Naive thymus-derived CD8-positive, alpha-beta T cell (primary cell): ENCODE measurements at regions of chr12 and their contacts with region 1.

Region 1: GRCh38 chr12:123614531-123614930 is 12.6 kb downstream of the DDX55 start:
- DNase-seq: no peak
- ATAC-seq: no peak
- H3K4me3 Mint-ChIP-seq: no peak overlapping the region
- H3K27ac Mint-ChIP-seq: no peak overlapping the region
- H3K4me1 Mint-ChIP-seq: peaks cover 0 to 6% (median 1%) of the 10 kb centered on the region in 4 donors
- H3K27me3 Mint-ChIP-seq: no peaks in the 10 kb centered on the region

Region 2: GRCh38 chr12:123533672-123534643 is 80.6 kb before region 1 on chr12 and contains the start of gene RILPL1:
- POLR2A ChIA-PET with region 1: no interaction called
- DNase-seq: peak; percentile 12 to 65 (median 49)
- ATAC-seq: peak; percentile 82 to 83
- H3K4me3 Mint-ChIP-seq: peak within 1 kb of the TSS; percentile 75 to 92 (median 87)
- H3K27ac Mint-ChIP-seq: peak within 1 kb of the TSS in 9 of 10 donors; percentile 29 to 88 (median 79)
- H3K4me1 Mint-ChIP-seq: peaks cover 7 to 20% (median 19%) of the 10 kb centered on the region in 4 donors
- H3K27me3 Mint-ChIP-seq: peaks cover 0 to 4% (median 0%) of the 10 kb centered on the region in 5 donors
- polyA plus RNA-seq, gene RILPL1: 0.06 to 0.24 (median 0.23) TPM

Region 3: GRCh38 chr12:123601602-123602489 is 12.7 kb before region 1 on chr12 and contains the start of gene DDX55:
- POLR2A ChIA-PET with region 1: interaction called, 10 read pairs
- DNase-seq: peak; percentile 81 to 90 (median 84)
- ATAC-seq: peak; percentile 93 to 97
- H3K4me3 Mint-ChIP-seq: peak within 1 kb of the TSS; percentile 88 to 99 (median 95)
- H3K27ac Mint-ChIP-seq: peak within 1 kb of the TSS; percentile 91 to 97 (median 94)
- H3K4me1 Mint-ChIP-seq: peaks cover 17 to 54% (median 40%) of the 10 kb centered on the region in 4 donors
- H3K27me3 Mint-ChIP-seq: no peaks in the 10 kb centered on the region
- polyA plus RNA-seq, gene DDX55: 15.2 to 24.1 (median 19.1) TPM

Region 4: DNA sequence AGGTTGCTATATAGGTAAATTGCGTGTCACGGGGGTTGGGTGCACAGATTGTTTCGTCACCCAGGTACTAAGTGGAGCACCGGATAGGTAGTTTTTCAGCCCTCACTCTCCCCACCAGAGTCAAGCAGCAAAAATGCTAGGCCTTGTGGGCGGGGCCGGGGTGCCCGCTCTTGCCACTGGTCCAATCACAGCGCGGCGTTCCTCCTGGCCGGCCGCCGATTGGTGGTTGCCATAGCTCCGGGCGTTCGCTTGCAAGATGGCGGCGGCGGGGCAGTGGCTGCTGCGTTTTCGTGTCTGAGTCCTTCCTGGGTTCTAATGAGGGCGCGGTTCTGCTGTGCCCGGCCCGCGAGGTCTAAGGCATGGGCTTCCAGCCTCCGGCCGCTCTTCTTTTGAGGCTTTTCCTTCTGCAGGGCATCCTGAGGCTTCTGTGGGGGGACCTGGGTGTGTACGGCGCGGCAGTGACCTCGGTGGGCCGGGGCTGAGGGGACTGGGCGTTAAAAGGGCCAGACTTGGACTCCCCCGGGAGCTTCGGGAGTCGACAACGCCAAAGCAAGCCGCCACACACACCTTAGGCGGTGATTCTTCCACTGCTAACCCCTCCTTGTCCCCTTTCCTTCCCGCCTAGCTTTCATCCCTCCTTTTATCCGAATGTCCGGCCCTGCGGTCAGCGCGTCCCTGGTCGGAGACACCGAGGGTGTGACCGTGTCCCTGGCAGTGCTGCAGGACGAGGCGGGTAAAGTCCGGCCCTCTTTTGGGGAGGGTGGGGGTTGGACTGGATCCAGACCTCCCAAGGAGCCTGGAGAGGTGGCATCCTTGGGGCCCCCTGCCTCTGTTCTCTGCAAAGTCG is 56.6 kb after region 1 on chr12 and contains the start of gene TCTN2:
- POLR2A ChIA-PET with region 1: no interaction called
- DNase-seq: peak; percentile 89 to 96 (median 92)
- ATAC-seq: peak; percentile 99 to 100
- H3K4me3 Mint-ChIP-seq: peak within 1 kb of the TSS; percentile 83 to 92 (median 89)
- H3K27ac Mint-ChIP-seq: peak within 1 kb of the TSS; percentile 16 to 93 (median 78)
- H3K4me1 Mint-ChIP-seq: peaks cover 4 to 20% (median 14%) of the 10 kb centered on the region in 4 donors
- H3K27me3 Mint-ChIP-seq: no peaks in the 10 kb centered on the region
- polyA plus RNA-seq, gene TCTN2: 1.0 to 1.8 (median 1.6) TPM

Region 5: DNA sequence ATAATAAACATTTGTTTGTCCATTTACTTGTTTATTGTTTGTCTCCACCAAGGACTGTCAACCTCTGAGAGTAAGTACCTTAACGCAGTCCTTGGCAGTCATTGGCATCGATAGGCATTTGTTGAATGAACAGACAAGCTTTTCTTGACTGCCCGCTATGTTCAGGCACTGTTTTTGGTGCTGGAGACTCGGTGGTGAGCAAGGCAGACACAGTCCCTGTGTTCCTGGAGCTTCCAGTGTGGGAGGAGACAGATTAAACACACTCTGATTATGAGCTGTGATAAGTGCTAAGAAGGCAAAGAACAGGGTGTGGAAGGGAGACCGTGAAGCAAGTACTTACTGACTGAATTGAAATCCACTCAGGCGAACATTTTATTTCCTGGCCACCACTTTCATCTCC is 98.9 kb after region 1 on chr12:
- POLR2A ChIA-PET with region 1: no interaction called
- DNase-seq: peak in 1 of 10 donors; percentile 2
- ATAC-seq: no peak
- H3K4me3 Mint-ChIP-seq: peak overlapping the region; percentile 81 to 94 (median 88)
- H3K27ac Mint-ChIP-seq: peak overlapping the region; percentile 74 to 90 (median 88)
- H3K4me1 Mint-ChIP-seq: peaks cover 19 to 42% (median 36%) of the 10 kb centered on the region in 4 donors
- H3K27me3 Mint-ChIP-seq: no peaks in the 10 kb centered on the region